CD8-positive, alpha-beta T cell (primary cell): ENCODE measurements at regions of chr2 and their contacts with region 1.

Region 1: DNA sequence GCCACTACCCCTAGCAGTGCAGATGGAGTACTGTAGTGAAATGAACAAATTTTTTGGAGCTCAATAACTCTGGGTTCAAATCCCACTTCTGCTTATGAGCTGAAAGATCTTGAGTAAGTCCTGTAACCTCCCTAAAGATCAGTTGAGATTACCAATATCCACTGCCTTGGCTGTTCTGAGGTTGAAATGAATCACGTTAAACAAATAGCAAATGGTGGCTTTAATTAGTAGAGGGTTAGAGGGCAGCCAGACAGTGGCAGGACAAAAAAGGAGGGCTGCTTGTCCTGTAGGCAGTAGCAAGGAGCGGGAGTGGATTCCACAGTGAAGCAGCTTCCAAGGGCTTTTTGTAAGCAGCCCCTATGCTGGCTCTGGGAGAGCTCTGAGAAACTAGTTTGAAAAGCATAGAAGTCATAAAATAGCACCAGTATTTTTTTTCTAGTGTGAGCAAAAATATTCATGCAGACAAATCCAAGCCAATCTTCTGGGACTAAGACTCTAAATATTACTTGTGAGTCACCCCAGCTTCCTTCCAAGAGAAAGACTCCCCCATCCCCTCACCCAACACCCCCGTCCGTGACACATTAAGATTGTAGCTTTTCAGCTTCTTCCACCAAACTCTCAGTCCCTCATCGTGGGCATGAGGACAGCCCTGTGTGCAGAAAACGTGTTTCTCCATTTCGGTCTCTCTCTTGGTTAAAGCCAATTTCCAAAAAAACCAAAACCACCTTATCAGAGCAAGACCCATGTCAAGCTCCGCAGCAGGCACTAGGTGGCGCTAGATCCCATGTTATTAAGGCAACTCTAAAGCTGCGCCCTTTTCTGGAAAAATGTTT is 123.5 kb upstream of the LGALSL start:
- DNase-seq: peak; percentile 52 to 88 (median 82)
- ATAC-seq: peak; percentile 15
- H3K4me3 ChIP-seq: no peak overlapping the region
- H3K4me3 Mint-ChIP-seq: peak overlapping the region; percentile 58
- H3K27ac ChIP-seq: no peak overlapping the region
- H3K27ac Mint-ChIP-seq: peak overlapping the region; percentile 52
- H3K4me1 ChIP-seq: peaks cover 28% of the 10 kb centered on the region
- H3K4me1 Mint-ChIP-seq: peaks cover 33% of the 10 kb centered on the region
- H3K27me3 ChIP-seq: no peaks in the 10 kb centered on the region
- H3K27me3 Mint-ChIP-seq: no peaks in the 10 kb centered on the region
- CTCF ChIP-seq: peak; percentile 91

Region 2: DNA sequence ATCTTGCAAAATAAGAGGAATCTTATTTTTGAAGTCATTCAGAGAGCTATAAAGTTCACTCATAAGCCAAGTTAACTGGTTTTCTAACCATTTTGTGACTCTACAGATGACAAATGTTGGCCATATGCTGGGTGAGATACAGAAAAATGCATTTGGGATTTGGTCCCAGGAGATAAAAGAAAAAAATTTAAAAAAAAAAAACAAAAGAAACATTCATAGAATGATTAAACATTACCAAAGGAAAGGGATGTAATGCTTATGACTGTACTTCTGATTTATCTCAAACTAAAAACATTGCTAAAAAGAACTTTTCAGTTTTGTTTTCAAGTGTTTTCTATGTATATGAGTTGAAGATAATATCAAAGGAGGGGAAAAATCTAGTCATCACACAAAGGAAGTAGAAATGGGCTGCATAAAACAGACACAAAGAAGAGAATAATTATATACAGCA is 229.3 kb before region 1 on chr2:
- CTCF ChIA-PET with region 1: interaction called, 12 read pairs
- POLR2A ChIA-PET with region 1: no interaction called
- intact Hi-C with region 1: no loop called
- DNase-seq: peak in 1 of 9 experiments; percentile 31
- ATAC-seq: peak; percentile 43
- H3K4me3 ChIP-seq: no peak overlapping the region
- H3K4me3 Mint-ChIP-seq: peak overlapping the region; percentile 30
- H3K27ac ChIP-seq: no peak overlapping the region
- H3K27ac Mint-ChIP-seq: peak overlapping the region; percentile 73
- H3K4me1 ChIP-seq: peaks cover 17% of the 10 kb centered on the region
- H3K4me1 Mint-ChIP-seq: peaks cover 36% of the 10 kb centered on the region
- H3K27me3 ChIP-seq: no peaks in the 10 kb centered on the region
- H3K27me3 Mint-ChIP-seq: no peaks in the 10 kb centered on the region
- CTCF ChIP-seq: no peak

Region 3: GRCh38 chr2:64214281-64215115 is 116.0 kb before region 1 on chr2:
- CTCF ChIA-PET with region 1: interaction called, 6 read pairs
- POLR2A ChIA-PET with region 1: no interaction called
- intact Hi-C with region 1: loop called in 1 of 2 experiments (anchors 5 kb)
- DNase-seq: peak in 3 of 9 experiments; percentile 25 to 51 (median 49)
- ATAC-seq: peak; percentile 70
- H3K4me3 ChIP-seq: no peak overlapping the region
- H3K4me3 Mint-ChIP-seq: peak overlapping the region; percentile 52
- H3K27ac ChIP-seq: peak overlapping the region in 1 of 2 experiments; percentile 13
- H3K27ac Mint-ChIP-seq: peak overlapping the region; percentile 77
- H3K4me1 ChIP-seq: peaks cover 18% of the 10 kb centered on the region
- H3K4me1 Mint-ChIP-seq: peaks cover 30% of the 10 kb centered on the region
- H3K27me3 ChIP-seq: no peaks in the 10 kb centered on the region
- H3K27me3 Mint-ChIP-seq: no peaks in the 10 kb centered on the region
- CTCF ChIP-seq: no peak

Region 4: DNA sequence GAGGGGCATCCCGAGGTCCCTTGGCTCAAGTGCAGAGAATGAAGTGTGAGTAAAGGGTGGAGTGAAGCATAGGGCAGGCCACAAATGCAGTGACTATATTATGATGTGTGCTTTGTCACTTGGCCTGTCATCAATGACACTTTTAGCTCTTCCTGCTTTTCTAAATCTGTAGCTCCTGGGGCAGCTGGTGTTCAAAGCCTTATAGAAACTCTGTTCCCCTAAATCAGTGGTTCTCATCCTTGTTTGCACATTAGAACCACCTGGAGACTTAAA is 12.1 kb before region 1 on chr2:
- CTCF ChIA-PET with region 1: interaction called, 18 read pairs
- POLR2A ChIA-PET with region 1: interaction called, 7 read pairs
- intact Hi-C with region 1: no loop called
- DNase-seq: no peak
- ATAC-seq: no peak
- H3K4me3 ChIP-seq: no peak overlapping the region
- H3K4me3 Mint-ChIP-seq: no peak overlapping the region
- H3K27ac ChIP-seq: no peak overlapping the region
- H3K27ac Mint-ChIP-seq: no peak overlapping the region
- H3K4me1 ChIP-seq: no peaks in the 10 kb centered on the region
- H3K4me1 Mint-ChIP-seq: peaks cover 11% of the 10 kb centered on the region
- H3K27me3 ChIP-seq: no peaks in the 10 kb centered on the region
- H3K27me3 Mint-ChIP-seq: no peaks in the 10 kb centered on the region
- CTCF ChIP-seq: no peak

Region 5: DNA sequence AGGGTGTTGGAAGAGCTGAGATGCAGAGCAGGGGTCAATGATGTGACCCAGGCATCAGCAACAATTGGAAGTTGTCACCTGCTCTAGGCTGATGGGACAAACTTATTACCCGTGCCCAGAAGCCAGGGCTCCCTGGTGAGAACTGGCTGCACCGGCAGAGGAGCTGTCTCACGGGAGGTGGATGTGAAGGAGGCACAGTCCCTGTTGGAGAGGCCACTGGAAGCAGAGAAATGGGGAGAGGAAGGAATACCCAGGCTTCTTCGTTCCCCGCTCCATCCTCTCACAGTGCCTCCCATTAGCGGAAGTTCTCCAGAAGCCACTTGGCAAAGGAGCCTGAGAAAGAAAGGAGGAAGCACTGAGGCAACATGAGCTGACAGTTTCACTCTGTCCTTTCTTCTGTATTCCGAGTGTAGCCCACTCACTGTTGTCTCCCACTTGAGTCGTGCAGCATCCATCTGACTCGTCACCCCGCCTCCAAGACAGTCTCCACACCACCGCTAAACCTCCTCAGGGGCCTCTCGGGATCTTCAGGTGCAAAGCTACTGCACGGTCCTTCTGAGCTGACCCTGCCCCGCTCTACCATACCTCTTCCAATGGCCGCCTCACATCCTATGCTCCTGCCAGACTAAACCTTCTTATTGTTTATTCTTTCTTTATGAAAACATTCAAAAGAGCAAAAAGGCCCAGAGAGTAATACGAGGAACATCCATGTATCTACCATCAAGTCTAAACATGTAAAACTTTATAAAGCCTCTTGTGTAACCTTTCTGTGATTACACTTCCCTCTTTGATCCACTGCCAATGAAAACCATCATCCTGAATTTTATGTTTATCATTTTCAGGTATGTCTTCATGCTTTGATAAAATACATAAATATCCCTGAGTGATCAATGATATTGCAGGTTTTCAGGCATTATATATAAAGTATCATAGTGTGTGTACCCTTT is 174.6 kb after region 1 on chr2:
- CTCF ChIA-PET with region 1: interaction called, 11 read pairs
- POLR2A ChIA-PET with region 1: no interaction called
- intact Hi-C with region 1: no loop called
- DNase-seq: no peak
- ATAC-seq: no peak
- H3K4me3 ChIP-seq: no peak overlapping the region
- H3K4me3 Mint-ChIP-seq: no peak overlapping the region
- H3K27ac ChIP-seq: no peak overlapping the region
- H3K27ac Mint-ChIP-seq: no peak overlapping the region
- H3K4me1 ChIP-seq: no peaks in the 10 kb centered on the region
- H3K4me1 Mint-ChIP-seq: no peaks in the 10 kb centered on the region
- H3K27me3 ChIP-seq: no peaks in the 10 kb centered on the region
- H3K27me3 Mint-ChIP-seq: peaks cover 5% of the 10 kb centered on the region
- CTCF ChIP-seq: no peak

Region 6: DNA sequence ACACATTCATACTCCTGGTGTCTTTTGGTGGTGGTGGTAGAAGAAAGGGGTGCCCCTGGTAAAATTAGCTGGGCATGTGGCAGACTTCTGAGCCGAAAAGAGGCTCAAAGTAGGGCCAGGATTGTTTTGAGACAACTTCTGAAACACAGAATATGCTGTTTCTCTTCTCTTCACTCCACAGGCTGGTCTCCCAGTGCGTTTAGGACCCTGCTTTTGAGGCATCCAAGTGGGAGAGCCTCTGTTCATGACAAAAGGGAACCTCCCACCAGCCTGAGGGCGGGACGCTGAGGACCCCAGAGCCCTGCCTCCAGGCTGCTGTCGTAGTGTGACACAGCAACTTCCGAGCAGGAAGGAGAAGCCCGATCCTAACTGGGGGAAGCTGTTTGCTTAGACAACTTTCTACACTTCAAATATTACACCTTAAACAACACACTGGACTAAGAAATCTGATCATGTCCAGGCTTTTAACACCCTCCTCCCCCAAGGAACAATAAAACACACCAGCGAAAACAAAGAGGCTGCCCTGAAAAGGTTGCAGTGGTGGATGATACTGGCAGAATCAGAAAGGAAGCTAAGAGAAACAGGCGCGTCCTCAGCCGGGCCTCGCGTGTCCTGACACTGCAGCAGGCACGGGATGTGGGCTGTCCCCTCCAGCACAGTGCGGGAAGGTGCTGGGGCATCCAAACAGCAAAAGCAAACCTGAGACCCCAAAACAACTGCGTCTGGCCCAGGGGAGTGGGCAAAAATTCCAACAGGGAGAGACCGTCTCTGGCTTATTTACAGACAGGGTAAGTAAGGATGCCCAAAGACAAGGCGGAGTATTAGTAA is 313.9 kb after region 1 on chr2:
- CTCF ChIA-PET with region 1: interaction called, 3 read pairs
- POLR2A ChIA-PET with region 1: no interaction called
- intact Hi-C with region 1: loop called in 1 of 2 experiments (anchors 10 kb)
- DNase-seq: peak in 7 of 9 experiments; percentile 45 to 80 (median 66)
- ATAC-seq: peak; percentile 74
- H3K4me3 ChIP-seq: peak overlapping the region; percentile 42 to 47
- H3K4me3 Mint-ChIP-seq: peak overlapping the region; percentile 89
- H3K27ac ChIP-seq: peak overlapping the region; percentile 50 to 82
- H3K27ac Mint-ChIP-seq: peak overlapping the region; percentile 93
- H3K4me1 ChIP-seq: peaks cover 71% of the 10 kb centered on the region
- H3K4me1 Mint-ChIP-seq: peaks cover 94% of the 10 kb centered on the region
- H3K27me3 ChIP-seq: no peaks in the 10 kb centered on the region
- H3K27me3 Mint-ChIP-seq: no peaks in the 10 kb centered on the region
- CTCF ChIP-seq: no peak

Region 7: GRCh38 chr2:64730551-64731262 is 400.2 kb after region 1 on chr2:
- CTCF ChIA-PET with region 1: no interaction called
- POLR2A ChIA-PET with region 1: no interaction called
- intact Hi-C with region 1: no loop called
- DNase-seq: peak in 8 of 9 experiments; percentile 29 to 83 (median 58)
- ATAC-seq: peak; percentile 75
- H3K4me3 ChIP-seq: peak overlapping the region; percentile 32 to 51
- H3K4me3 Mint-ChIP-seq: peak overlapping the region; percentile 87
- H3K27ac ChIP-seq: peak overlapping the region; percentile 69 to 78
- H3K27ac Mint-ChIP-seq: peak overlapping the region; percentile 99
- H3K4me1 ChIP-seq: peaks cover 43% of the 10 kb centered on the region
- H3K4me1 Mint-ChIP-seq: peaks cover 61% of the 10 kb centered on the region
- H3K27me3 ChIP-seq: no peaks in the 10 kb centered on the region
- H3K27me3 Mint-ChIP-seq: no peaks in the 10 kb centered on the region
- CTCF ChIP-seq: no peak